Heart left ventricle (tissue), 16 donors: ENCODE measurements at regions of chr10 and their contacts with region 1.

Region 1: DNA sequence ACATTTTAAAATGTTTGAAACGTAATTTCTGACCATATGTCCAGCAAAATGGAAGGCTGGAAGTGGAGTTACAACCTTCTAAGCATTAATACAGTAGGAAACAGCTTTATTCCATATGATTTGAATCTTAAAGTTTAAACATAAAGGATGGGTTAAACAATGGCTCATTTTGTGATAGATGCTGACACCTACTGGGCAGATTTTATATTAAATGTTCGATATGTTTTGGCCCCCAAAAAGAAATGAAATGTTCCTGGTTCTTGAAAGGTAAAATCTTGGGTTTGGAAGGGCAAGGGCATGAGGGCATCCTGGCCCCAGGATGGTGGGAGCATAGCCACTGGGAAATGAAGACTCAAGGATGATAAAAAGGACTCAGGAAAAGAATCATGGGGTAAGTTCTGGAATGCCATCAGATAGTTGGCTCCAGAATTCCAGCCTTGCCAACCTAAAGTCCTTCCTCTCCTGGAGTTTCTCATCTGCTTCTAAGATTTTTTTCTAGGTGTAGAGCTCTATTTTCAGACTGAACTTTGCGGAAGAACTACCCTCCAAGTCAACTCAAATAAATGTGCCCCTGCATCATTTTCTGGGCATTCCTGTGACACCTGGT is 34.6 kb upstream of the SLC35G1 start:
- DNase-seq: no peak
- ATAC-seq: no peak
- H3K4me3 ChIP-seq: no peak overlapping the region
- H3K27ac ChIP-seq: no peak overlapping the region
- H3K4me1 ChIP-seq: no peaks in the 10 kb centered on the region
- H3K27me3 ChIP-seq: peaks cover 0 to 3% (median 0%) of the 10 kb centered on the region in 9 donors
- CTCF ChIP-seq: peak in 8 of 12 donors; percentile 13 to 40 (median 24)
- POLR2A ChIP-seq: no peak

Region 2: DNA sequence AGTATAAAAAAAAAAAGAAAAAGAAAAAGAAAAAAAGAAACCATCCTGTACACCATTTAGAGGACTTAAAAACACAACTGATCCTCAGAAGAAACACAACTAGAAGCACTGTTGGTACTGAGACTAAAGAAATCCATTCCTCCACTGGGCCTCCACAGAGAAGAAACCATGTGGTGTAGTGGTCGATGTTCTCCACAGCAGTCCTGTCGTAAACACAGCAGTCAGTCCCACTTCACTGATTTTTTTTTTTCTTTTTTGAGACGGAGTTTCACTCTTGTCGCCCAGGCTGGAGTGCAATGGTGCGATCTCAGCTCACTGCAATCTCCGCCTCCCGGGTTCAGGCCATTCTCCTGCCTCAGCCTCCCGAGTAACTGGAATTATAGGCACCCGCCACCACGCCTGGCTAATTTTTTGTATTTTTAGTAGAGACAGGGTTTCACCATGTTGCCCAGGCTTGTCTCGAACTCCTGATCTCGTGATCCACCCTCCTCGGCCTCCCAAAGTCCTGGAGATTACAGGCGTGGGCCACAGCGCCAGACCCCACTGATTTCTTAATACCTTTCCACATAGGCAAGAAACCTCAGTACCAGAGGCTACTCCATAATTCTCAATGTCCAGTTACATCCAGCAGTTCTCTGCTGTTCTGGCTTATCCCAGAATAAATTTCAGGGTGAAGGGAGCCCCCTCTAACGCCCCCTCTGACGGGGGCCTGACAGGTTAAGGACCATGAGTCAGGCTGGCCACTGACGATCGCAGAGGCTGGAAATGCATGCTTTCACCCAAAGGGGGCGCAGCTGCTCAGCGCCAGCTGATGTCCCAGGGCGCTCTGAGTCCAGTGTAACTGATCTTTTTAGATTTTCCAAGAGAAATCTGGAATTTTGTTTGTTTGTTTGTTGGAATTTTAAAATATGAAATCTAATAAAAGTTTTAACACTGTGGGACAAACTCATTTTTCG is 317.5 kb before region 1 on chr10:
- intact Hi-C with region 1: loop called in 1 of 10 experiments (anchors 10 kb)
- DNase-seq: peak in 4 of 5 donors; percentile 37 to 70 (median 42)
- ATAC-seq: peak; percentile 81 to 90 (median 86)
- H3K4me3 ChIP-seq: peak overlapping the region in 10 of 12 donors; percentile 0 to 47 (median 32)
- H3K27ac ChIP-seq: peak overlapping the region in 4 of 12 donors; percentile 7 to 51 (median 40)
- H3K4me1 ChIP-seq: peaks cover 0 to 15% (median 8%) of the 10 kb centered on the region in 12 donors
- H3K27me3 ChIP-seq: no peaks in the 10 kb centered on the region
- CTCF ChIP-seq: peak; percentile 71 to 91 (median 83)
- POLR2A ChIP-seq: no peak

Region 3: DNA sequence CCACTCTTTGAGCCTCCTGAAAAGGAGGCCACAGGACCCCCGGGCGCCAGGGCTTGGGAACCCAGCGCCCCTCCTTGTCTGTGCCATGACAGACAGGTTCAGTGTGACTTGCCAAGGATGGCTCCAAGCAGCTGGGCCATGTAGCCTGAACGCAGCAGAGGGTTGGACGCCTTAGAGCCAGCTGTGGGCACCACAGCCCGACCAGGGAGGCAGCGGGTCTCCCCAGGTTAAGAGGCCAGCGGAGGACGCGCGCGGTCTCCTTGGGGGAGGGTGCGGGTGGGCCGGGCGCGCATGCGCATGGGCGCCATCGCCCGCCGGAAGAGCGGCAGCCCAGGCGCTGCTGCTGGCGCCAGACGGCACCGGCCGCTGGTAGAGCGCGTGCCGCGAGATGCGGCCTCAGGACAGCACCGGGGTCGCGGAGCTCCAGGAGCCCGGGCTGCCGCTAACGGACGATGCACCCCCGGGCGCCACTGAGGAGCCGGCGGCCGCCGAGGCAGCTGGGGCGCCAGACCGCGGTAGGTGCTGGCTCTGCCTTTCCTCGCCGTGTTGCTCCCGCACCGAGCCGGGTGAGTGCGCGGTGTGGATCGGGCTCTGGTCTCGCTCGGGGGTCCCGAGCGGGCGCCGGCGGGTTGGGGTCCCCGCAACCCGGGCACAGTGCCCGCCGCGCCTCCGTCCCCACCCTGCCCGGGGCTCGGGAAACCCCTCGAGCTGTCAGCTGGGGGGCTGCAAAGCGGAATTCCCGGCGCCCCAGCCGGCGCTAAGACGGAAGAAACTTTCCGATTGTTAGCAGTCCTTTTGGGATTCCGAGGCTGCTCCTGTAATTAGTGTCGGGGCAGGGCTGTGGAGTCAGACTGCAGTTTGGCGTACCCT is 34.7 kb after region 1 on chr10 and contains the start of gene SLC35G1:
- intact Hi-C with region 1: no loop called
- DNase-seq: peak; percentile 44 to 88 (median 69)
- ATAC-seq: peak; percentile 55 to 98 (median 93)
- H3K4me3 ChIP-seq: peak within 1 kb of the TSS; percentile 67 to 95 (median 80)
- H3K27ac ChIP-seq: peak within 1 kb of the TSS in 8 of 12 donors; percentile 19 to 64 (median 49)
- H3K4me1 ChIP-seq: peaks cover 0 to 23% (median 9%) of the 10 kb centered on the region in 12 donors
- H3K27me3 ChIP-seq: no peaks in the 10 kb centered on the region
- CTCF ChIP-seq: no peak
- POLR2A ChIP-seq: peak in 1 of 2 donors; percentile 73
- total RNA-seq, gene SLC35G1: 1.5 to 4.1 (median 2.6) TPM

Region 4: DNA sequence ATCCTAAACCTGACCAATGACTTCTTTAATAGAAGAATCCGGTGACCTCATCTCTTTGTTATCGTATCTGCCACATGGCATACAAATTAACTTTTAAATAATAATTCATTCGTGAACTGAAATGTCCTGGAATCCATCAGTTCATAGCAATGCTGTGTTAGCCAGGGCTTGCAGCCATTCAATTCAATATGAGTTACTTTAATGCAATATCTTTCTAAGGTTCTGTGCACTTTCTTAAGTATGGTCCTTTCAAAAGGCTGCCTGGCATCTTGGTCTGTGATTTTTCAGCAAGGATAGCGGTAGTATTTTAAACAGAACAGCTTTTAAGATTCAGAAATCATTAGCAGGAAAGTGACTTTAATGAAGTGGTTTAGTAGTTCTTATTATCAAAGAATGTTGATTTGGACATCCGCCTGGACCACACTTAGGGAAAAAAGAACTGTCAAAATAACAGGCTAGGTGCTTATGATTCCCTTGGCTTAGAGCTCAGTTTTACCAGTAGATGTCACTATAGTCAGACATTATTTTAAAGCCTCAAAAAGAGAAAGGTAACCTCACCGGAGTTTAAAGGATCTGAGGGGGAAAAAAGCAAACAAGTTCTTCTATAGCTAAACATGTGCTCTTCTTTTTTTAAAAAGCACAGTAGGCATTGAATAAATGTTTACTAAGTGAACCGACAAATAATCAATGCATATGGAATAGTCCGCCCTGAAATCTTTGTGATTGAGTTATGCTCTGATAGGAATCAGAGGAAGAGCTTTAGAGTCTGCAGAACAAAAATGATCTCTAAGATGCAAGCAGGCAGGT is 57.3 kb after region 1 on chr10:
- intact Hi-C with region 1: no loop called
- DNase-seq: no peak
- ATAC-seq: peak in 3 of 4 donors; percentile 63 to 72 (median 66)
- H3K4me3 ChIP-seq: peak overlapping the region in 7 of 12 donors; percentile 4 to 36 (median 14)
- H3K27ac ChIP-seq: no peak overlapping the region
- H3K4me1 ChIP-seq: peaks cover 0 to 13% (median 4%) of the 10 kb centered on the region in 12 donors
- H3K27me3 ChIP-seq: no peaks in the 10 kb centered on the region
- CTCF ChIP-seq: peak in 11 of 12 donors; percentile 33 to 70 (median 56)
- POLR2A ChIP-seq: no peak

Region 5: GRCh38 chr10:93968540-93968945 is 109.4 kb after region 1 on chr10:
- intact Hi-C with region 1: no loop called
- DNase-seq: peak in 4 of 5 donors; percentile 49 to 64 (median 61)
- ATAC-seq: peak; percentile 82 to 96 (median 91)
- H3K4me3 ChIP-seq: no peak overlapping the region
- H3K27ac ChIP-seq: no peak overlapping the region
- H3K4me1 ChIP-seq: peaks cover 0 to 20% (median 3%) of the 10 kb centered on the region in 12 donors
- H3K27me3 ChIP-seq: no peaks in the 10 kb centered on the region
- CTCF ChIP-seq: no peak
- POLR2A ChIP-seq: no peak